ENCODE measurements at regions of chr2 and their contacts with region 1.

Region 1: DNA sequence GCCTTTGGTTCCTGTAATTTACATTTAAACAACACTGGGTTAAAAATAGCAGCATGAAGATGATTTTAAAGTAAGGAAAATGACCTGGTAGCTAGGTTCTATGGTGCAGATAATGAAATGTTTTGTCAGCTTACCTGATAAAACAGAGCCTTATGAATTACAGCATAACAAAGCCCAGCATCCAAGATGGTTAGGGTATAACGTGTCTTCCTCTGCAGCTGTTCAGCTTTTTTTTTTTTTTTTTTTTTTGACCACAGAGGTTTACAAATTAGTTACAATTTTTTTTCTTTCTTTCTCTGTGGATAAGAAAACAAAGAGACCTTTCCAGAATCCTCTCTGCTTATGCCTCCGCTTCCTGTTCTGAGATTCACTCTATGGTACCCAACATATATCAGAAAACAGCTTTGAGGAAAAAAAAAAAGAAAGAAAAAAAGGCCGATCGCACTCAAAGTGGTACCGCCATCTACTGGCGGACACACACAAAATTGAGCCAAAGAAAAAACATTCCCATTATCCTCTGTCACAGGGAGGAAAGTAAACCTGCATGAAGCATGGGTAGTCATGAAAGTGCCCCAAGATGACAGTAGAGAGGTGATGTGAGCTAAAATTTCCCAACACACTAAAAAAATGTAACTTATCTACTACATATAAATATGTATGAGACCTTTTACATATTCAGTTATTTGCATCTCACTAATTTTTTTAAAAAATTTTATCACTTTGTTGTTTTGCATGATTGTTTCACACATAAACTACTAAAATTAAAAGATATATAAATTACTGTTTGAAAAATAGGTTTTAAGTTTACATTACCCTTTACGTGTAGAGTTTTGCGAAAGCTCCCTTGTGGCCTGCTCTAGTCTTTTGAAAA is at the start of gene SCN3A:
- DNase-seq: peak; percentile 30
- ATAC-seq: peak; percentile 19
- H3K4me3 Mint-ChIP-seq: no peak within 1 kb of the TSS
- H3K27ac Mint-ChIP-seq: no peak within 1 kb of the TSS
- H3K4me1 Mint-ChIP-seq: no peaks in the 10 kb centered on the region
- H3K27me3 Mint-ChIP-seq: peaks cover 2% of the 10 kb centered on the region
- total RNA-seq, gene SCN3A: 0.23 to 0.30 TPM

Region 2: DNA sequence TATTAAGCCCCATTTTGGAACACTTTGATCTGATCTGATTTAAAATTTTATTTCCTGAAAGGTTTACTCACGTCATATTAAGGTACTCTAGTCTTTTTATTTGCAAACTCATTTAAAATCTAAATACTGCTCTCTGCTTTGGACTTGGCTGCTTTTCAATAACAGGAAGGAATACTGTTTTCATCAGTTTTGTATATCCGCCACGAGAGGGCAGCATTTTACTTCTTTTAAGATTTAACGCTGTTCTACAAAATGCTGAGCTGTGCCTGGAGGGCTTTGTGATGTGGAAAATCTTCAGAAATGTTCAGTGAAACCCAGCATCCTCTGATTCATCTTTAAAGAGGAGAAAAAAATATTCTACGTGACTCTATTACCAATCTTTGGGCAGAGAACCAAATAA is 211.1 kb before region 1 on chr2:
- CTCF ChIA-PET with region 1: interaction called, 6 read pairs
- POLR2A ChIA-PET with region 1: no interaction called
- intact Hi-C with region 1: loop called in 1 of 2 experiments (anchors 2 kb)
- DNase-seq: peak; percentile 49
- ATAC-seq: peak; percentile 58
- H3K4me3 Mint-ChIP-seq: no peak overlapping the region
- H3K27ac Mint-ChIP-seq: no peak overlapping the region
- H3K4me1 Mint-ChIP-seq: peaks cover 14% of the 10 kb centered on the region
- H3K27me3 Mint-ChIP-seq: no peaks in the 10 kb centered on the region

Region 3: GRCh38 chr2:165144315-165144714 is 59.6 kb before region 1 on chr2:
- CTCF ChIA-PET with region 1: interaction called, 6 read pairs
- POLR2A ChIA-PET with region 1: no interaction called
- intact Hi-C with region 1: loop called (anchors 5 kb)
- DNase-seq: no peak
- ATAC-seq: no peak
- H3K4me3 Mint-ChIP-seq: no peak overlapping the region
- H3K27ac Mint-ChIP-seq: no peak overlapping the region
- H3K4me1 Mint-ChIP-seq: peaks cover 2% of the 10 kb centered on the region
- H3K27me3 Mint-ChIP-seq: peaks cover 1% of the 10 kb centered on the region

Region 4: DNA sequence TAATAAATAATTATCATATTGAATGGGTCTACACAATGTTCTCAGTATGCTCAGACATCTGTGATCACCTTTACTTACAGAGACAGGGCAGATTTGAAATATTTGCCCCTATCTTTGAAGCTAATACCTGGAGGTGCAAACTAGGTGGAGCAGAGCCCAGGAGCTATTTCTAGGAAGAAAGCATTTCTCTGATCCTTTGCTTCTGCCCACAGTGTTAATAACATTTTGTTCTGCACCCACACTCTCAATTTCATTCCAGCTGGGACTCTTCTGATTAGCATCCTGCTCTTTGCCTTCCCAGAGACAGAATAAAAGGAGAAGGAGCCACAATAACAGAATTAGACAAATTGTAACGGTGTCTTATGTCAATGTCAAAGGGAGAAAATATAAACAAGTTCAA is 23.6 kb after region 1 on chr2:
- CTCF ChIA-PET with region 1: no interaction called
- POLR2A ChIA-PET with region 1: no interaction called
- intact Hi-C with region 1: no loop called
- DNase-seq: no peak
- ATAC-seq: no peak
- H3K4me3 Mint-ChIP-seq: no peak overlapping the region
- H3K27ac Mint-ChIP-seq: no peak overlapping the region
- H3K4me1 Mint-ChIP-seq: no peaks in the 10 kb centered on the region
- H3K27me3 Mint-ChIP-seq: no peaks in the 10 kb centered on the region

Region 5: GRCh38 chr2:165462443-165462842 is 258.5 kb after region 1 on chr2:
- CTCF ChIA-PET with region 1: no interaction called
- POLR2A ChIA-PET with region 1: no interaction called
- intact Hi-C with region 1: no loop called
- DNase-seq: no peak
- ATAC-seq: no peak
- H3K4me3 Mint-ChIP-seq: no peak overlapping the region
- H3K27ac Mint-ChIP-seq: no peak overlapping the region
- H3K4me1 Mint-ChIP-seq: no peaks in the 10 kb centered on the region
- H3K27me3 Mint-ChIP-seq: no peaks in the 10 kb centered on the region